Activated CD4-positive, alpha-beta memory T cell treated with anti-CD3 and anti-CD28 coated beads, Interleukin-2, amount 10 ng/mL, durations not matched to agents 7 days and 5 days (primary cell): ENCODE measurements at regions of chr5 and their contacts with region 1.

Region 1: DNA sequence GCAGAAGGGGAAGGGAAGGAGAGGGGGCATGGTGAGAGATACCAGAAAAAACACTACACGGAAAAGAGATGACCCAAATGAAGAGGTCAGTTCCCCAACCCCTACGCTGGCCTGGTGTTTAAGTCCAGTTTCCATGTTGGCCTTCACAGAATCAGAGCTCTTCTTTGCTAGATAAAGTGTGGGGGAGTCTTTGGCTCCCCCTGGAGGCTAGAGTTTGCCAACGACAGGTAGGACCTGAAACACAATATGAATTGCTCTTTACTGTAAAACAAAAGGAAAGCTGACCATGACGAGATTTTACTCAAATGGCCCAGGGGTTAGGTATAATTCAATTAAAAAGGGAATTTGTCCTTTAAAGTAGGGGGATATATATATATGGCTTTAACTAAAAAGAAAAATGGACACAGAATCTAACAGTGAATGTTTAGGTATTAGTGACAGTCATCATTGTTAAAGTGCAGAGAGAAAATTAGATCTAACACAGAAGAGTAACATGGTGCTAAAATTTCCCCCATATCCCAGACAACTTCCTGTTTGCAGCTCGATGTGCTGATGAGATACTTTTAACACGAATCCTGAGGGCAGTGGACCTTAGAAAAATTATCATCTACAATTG is 92.0 kb downstream of the SV2C start:
- DNase-seq: peak; percentile 72
- H3K4me3 Mint-ChIP-seq: peak overlapping the region; percentile 30
- H3K27ac Mint-ChIP-seq: peak overlapping the region; percentile 92
- H3K4me1 Mint-ChIP-seq: peaks cover 42% of the 10 kb centered on the region
- H3K27me3 Mint-ChIP-seq: no peaks in the 10 kb centered on the region

Region 2: DNA sequence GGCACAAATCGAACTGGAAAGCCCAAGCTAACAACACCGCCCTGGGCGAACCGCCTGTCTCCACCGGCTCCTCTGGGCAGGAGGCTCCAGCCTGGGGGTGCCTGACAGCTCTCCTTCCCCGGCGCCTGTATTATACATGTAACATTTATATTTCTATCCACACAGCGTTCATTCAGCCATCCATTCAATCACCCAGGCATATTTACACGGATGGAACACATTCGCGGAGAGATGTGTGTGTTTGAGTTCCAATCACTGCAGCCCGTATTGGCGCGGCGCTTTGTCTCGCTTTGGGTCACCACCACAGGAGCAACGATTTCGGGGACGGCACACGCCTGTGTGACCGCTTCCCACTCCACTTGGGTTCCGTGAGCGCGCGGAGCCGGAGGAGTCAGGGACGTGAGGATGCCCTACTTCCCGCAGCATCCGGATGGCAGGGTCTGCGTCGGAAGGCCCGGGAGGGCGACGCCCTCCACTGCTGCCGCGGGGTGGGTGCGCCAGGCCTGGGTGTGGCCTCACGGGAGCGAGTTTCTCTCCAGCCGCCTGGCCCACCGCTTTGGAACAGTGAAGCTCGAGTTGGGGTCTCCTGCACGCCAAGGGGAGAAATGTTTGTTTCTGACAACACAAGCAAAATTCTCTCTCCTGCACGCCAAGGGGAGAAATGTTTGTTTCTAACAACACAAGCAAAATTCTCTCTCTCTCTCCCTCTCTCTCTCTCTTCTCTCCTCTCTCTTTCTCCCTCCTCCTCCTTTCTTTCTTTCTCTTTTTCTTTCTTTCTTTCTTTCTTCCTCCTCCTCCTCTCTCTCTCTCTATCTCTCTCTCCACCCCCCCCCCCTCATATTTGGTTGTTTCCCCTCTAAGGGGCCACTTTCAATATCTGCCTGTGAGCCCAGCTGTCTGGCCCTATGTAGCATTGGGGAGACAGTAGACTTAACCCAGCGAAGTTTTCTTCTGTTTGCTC is 93.1 kb before region 1 on chr5:
- CTCF ChIA-PET with region 1: interaction called, 10 read pairs
- POLR2A ChIA-PET with region 1: interaction called, 8 read pairs
- DNase-seq: peak; percentile 19
- H3K4me3 Mint-ChIP-seq: peak overlapping the region; percentile 74
- H3K27ac Mint-ChIP-seq: no peak overlapping the region
- H3K4me1 Mint-ChIP-seq: peaks cover 31% of the 10 kb centered on the region
- H3K27me3 Mint-ChIP-seq: peaks cover 87% of the 10 kb centered on the region

Region 3: GRCh38 chr5:76145945-76146344 is 29.2 kb before region 1 on chr5:
- CTCF ChIA-PET with region 1: interaction called, 31 read pairs
- POLR2A ChIA-PET with region 1: interaction called, 3 read pairs
- DNase-seq: peak; percentile 21
- H3K4me3 Mint-ChIP-seq: no peak overlapping the region
- H3K27ac Mint-ChIP-seq: no peak overlapping the region
- H3K4me1 Mint-ChIP-seq: no peaks in the 10 kb centered on the region
- H3K27me3 Mint-ChIP-seq: no peaks in the 10 kb centered on the region

Region 4: GRCh38 chr5:76209297-76209696 is 34.1 kb after region 1 on chr5:
- CTCF ChIA-PET with region 1: interaction called, 12 read pairs
- POLR2A ChIA-PET with region 1: no interaction called
- DNase-seq: no peak
- H3K4me3 Mint-ChIP-seq: no peak overlapping the region
- H3K27ac Mint-ChIP-seq: no peak overlapping the region
- H3K4me1 Mint-ChIP-seq: no peaks in the 10 kb centered on the region
- H3K27me3 Mint-ChIP-seq: peaks cover 12% of the 10 kb centered on the region

Region 5: DNA sequence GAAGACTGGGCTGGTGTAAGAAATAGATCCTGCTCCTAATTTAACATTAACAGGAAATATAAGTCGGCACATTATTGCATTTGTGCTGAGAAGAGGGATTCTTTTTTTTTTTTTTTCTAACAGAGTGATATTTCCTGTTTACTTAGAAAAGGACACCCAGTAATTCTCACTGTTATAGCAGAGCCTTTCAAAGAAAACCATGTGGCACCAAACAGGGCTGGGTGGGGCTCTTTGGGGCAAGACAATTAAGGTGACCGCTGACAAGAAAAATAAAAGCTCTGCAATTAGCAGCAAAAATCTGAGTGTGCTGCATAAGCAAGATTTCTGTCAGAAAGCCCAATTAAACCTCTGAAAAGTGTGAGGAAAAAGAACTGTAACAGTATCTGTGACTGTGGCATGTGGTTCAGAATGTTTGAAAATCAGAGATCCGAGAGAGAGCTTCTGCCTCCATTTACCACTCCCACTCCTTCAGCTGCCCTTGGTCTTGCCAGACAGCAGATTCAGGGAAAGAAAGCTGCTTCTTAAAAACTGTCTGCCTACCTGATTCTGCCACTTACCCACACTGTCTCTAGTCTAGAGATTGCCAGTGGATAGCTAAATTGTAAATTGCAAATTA is 150.8 kb after region 1 on chr5:
- CTCF ChIA-PET with region 1: interaction called, 4 read pairs
- POLR2A ChIA-PET with region 1: interaction called, 10 read pairs
- DNase-seq: peak; percentile 79
- H3K4me3 Mint-ChIP-seq: peak overlapping the region; percentile 44
- H3K27ac Mint-ChIP-seq: peak overlapping the region; percentile 99
- H3K4me1 Mint-ChIP-seq: peaks cover 72% of the 10 kb centered on the region
- H3K27me3 Mint-ChIP-seq: no peaks in the 10 kb centered on the region

Region 6: GRCh38 chr5:76544268-76544926 is 369.2 kb after region 1 on chr5:
- CTCF ChIA-PET with region 1: interaction called, 4 read pairs
- POLR2A ChIA-PET with region 1: interaction called, 10 read pairs
- DNase-seq: peak; percentile 73
- H3K4me3 Mint-ChIP-seq: peak overlapping the region; percentile 75
- H3K27ac Mint-ChIP-seq: peak overlapping the region; percentile 99
- H3K4me1 Mint-ChIP-seq: peaks cover 93% of the 10 kb centered on the region
- H3K27me3 Mint-ChIP-seq: no peaks in the 10 kb centered on the region